Caki2 (cell line): ENCODE measurements at regions of chr1 and their contacts with region 1.

Region 1: GRCh38 chr1:89129911-89130310 is 4.0 kb upstream of the GBP2 start:
- DNase-seq: no peak

Region 2: GRCh38 chr1:89008511-89008910 is 121.4 kb before region 1 on chr1:
- in situ Hi-C with region 1: no loop called
- DNase-seq: no peak

Region 3: DNA sequence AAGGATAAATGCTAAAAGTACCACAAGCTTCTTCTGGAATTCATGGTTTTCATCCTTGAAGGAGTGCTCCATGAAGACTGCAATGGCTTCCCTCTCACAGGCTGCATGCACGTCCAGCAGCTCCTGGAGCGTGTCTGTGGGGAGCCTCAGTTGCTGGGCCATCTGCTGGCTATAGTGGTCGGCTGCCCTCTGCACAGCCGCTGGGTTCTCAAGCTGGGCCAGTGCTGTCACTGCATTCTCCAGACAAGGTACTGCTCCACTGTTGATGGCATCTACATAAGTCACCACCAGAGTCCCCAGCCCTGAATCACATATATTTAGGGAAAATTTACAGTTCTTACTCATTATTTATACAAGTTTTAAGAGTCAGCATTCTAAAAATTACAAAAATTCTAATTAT is 60.1 kb after region 1 on chr1:
- in situ Hi-C with region 1: loop called (anchors 5 kb)
- DNase-seq: no peak